Lower leg skin (tissue), 4 donors: ENCODE measurements at regions of chr4 and their contacts with region 1.

Region 1: GRCh38 chr4:74531963-74532794 is 87.2 kb downstream of the AREG start:
- DNase-seq: no peak
- H3K4me3 ChIP-seq: no peak overlapping the region
- CTCF ChIP-seq: no peak
- POLR2A ChIP-seq: no peak

Region 2: DNA sequence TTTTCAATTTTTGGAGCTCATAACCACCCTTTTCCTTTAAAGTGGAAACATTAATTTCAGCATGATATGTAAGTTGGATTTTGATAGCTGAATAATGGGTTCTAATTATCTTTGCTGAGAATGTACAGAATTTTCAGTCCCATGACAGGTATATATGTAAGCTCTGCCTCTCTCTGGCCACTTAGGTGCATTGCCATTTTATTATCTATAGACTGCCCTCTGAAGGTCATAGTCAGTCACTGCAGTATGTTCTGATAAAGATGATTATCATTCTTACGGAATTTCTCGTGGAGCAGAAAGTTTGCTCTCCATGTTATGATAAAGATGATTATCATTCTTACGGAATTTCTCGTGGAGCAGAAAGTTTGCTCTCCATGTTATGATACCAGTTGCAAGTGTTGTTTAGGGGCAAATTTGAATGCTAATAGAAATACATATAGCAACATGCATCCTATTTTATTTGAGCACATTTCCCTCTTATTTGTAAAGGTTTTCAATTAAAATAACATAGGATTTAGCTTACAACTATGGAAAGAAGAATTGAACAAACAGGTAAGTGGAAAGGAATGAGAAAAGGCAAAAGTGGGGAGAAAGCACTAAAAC is 1085.7 kb before region 1 on chr4:
- intact Hi-C with region 1: no loop called
- DNase-seq: no peak
- H3K4me3 ChIP-seq: no peak overlapping the region
- CTCF ChIP-seq: no peak
- POLR2A ChIP-seq: no peak

Region 3: GRCh38 chr4:73481358-73481757 is 1050.8 kb before region 1 on chr4 and contains the start of gene AFM:
- intact Hi-C with region 1: loop called (anchors 5 kb)
- DNase-seq: no peak
- H3K4me3 ChIP-seq: no peak within 1 kb of the TSS
- CTCF ChIP-seq: no peak
- POLR2A ChIP-seq: no peak
- total RNA-seq, gene AFM: not detected

Region 4: DNA sequence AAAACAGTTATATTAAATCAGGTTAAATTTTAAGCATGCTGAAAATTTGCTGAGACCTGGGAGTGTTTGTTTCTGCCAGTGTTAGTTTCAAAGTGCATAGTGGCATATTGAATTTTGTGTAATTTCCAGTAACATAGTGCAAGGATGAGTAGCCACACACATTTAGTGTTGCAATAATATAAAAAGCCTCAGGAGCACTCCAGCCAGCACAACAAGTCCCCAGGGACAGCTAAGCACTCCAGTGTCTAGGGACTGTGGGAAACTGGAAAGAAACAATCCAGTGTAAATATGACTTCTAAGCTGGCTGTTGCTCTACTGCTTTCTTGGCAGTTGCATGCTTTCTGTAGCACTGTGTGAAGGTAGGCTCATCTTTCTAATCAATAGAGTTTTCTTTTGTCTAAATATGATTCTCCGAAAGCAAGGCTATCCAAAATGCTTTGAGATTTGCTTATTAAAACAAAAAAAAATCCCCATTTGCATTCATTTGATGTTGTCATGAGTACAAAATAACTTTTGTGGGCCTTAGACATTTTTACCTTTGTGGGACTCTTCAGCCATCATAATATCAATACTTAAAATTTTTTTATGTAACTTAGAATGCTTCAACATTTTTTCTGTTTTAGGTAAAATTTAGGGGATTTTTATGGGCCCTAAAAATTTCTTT is 409.0 kb before region 1 on chr4:
- intact Hi-C with region 1: no loop called
- DNase-seq: no peak
- H3K4me3 ChIP-seq: no peak overlapping the region
- CTCF ChIP-seq: no peak
- POLR2A ChIP-seq: no peak

Region 5: GRCh38 chr4:74376888-74377483 is 155.2 kb before region 1 on chr4:
- intact Hi-C with region 1: loop called (anchors 5 kb)
- DNase-seq: no peak
- H3K4me3 ChIP-seq: no peak overlapping the region
- CTCF ChIP-seq: no peak
- POLR2A ChIP-seq: no peak

Region 6: DNA sequence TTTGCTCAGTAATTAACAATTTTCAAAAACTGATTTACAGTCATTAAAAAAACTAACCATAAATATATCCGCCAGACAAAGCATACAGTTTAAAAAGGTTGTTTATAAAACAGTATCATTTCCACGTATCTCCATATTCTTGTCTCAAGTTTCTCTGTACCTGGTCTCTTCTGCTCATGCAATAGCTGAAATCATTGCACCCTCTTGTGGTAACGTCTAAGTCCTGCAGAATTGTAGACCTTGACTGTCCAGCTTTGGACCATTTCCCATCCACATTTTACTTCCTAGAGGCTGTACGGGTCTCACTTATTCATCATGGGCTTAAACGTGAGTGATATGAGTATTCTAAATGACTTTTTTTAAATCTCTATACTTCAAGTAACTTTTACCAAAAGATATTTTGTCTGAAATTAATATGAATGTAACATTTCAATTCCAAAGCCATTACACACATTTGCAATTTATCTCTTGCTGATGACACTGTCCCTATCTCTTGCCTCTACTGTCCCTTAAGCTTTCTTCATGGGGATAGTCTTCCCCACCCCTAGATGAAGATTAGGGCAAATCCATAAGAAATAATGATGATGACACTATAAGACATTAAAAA is 143.6 kb after region 1 on chr4:
- intact Hi-C with region 1: loop called (anchors 10 kb)
- DNase-seq: no peak
- H3K4me3 ChIP-seq: no peak overlapping the region
- CTCF ChIP-seq: no peak
- POLR2A ChIP-seq: no peak

Region 7: DNA sequence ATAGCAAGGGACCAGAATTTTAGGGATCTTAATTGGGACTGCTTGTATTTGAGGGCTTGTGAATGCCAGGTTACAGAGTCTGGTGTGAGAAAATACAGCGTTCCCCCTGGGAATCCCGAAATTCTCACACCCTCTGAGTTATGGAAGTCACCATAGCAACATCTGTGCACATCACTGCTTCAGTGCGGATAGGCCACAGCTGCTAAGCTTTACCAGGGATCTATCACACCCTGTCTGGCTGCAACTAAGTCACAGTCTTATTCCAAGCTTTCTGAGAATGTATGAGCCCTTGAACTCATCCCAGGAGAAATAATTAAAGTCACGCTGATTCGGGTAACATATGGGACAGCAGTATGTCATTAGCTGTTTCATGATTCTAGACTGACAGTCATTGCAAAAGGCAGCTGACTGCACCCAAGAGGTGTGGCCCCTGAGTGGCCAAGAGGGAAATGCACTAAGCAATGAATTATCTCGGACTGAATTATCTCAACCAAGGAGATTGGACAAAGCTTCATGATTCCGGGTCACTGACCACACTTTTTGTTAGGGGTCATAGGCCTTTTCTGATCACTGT is 308.8 kb after region 1 on chr4:
- intact Hi-C with region 1: no loop called
- DNase-seq: no peak
- H3K4me3 ChIP-seq: no peak overlapping the region
- CTCF ChIP-seq: no peak
- POLR2A ChIP-seq: no peak